Naive thymus-derived CD4-positive, alpha-beta T cell (primary cell): ENCODE measurements at regions of chr7 and their contacts with region 1.

Region 1: GRCh38 chr7:45923290-45923689 is 2.2 kb upstream of the IGFBP3 start:
- DNase-seq: peak in 5 of 9 donors; percentile 26 to 51 (median 31)
- ATAC-seq: no peak
- H3K4me3 ChIP-seq: no peak overlapping the region
- H3K4me3 Mint-ChIP-seq: peak overlapping the region in 9 of 10 donors; percentile 53 to 82 (median 63)
- H3K27ac ChIP-seq: no peak overlapping the region
- H3K27ac Mint-ChIP-seq: peak overlapping the region in 1 of 9 donors; percentile 44
- H3K4me1 ChIP-seq: peaks cover 0 to 9% of the 10 kb centered on the region in 2 donors
- H3K4me1 Mint-ChIP-seq: peaks cover 14 to 29% (median 28%) of the 10 kb centered on the region in 7 donors
- H3K27me3 ChIP-seq: peaks cover 0 to 6% of the 10 kb centered on the region in 2 donors
- H3K27me3 Mint-ChIP-seq: peaks cover 33 to 72% (median 44%) of the 10 kb centered on the region in 5 donors

Region 2: DNA sequence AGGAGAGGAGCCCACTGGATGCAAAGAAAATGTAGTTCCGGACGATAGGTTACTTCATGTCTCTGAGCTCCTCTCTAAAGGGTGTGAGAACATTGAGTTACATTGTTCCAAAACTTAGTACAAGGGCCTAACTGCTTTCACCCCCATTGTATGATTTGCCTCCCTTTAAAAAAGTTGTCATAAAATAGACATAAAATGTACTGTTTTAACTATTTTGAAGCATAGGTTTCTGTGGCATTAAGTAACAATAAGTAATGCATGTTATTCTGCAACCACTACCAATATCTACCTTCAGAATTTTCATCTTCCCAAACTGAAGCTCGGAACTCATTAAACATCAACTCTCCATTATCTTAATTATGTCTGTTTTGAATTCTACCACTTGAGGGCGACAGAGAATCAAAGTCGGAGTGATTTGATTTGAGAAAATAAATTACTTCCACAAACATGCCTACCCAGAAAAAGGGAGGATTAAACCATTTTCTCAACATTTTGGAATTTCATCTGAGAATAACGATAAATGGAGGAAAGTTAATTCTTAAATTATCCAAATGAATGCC is 32.3 kb before region 1 on chr7:
- CTCF ChIA-PET with region 1: interaction called, 3 read pairs
- POLR2A ChIA-PET with region 1: no interaction called
- intact Hi-C with region 1: loop called in 1 of 2 experiments (anchors 1 kb)
- DNase-seq: peak in 3 of 9 donors; percentile 3 to 14 (median 9)
- ATAC-seq: no peak
- H3K4me3 ChIP-seq: no peak overlapping the region
- H3K4me3 Mint-ChIP-seq: no peak overlapping the region
- H3K27ac ChIP-seq: no peak overlapping the region
- H3K27ac Mint-ChIP-seq: no peak overlapping the region
- H3K4me1 ChIP-seq: no peaks in the 10 kb centered on the region
- H3K4me1 Mint-ChIP-seq: peaks cover 0 to 3% (median 0%) of the 10 kb centered on the region in 7 donors
- H3K27me3 ChIP-seq: no peaks in the 10 kb centered on the region
- H3K27me3 Mint-ChIP-seq: peaks cover 53 to 80% (median 65%) of the 10 kb centered on the region in 5 donors

Region 3: GRCh38 chr7:45940939-45941338 is 17.6 kb after region 1 on chr7:
- CTCF ChIA-PET with region 1: interaction called, 9 read pairs
- POLR2A ChIA-PET with region 1: interaction called, 7 read pairs
- intact Hi-C with region 1: loop called in 1 of 2 experiments (anchors 1 kb)
- DNase-seq: no peak
- ATAC-seq: no peak
- H3K4me3 ChIP-seq: peak overlapping the region; percentile 49
- H3K4me3 Mint-ChIP-seq: peak overlapping the region; percentile 77 to 93 (median 86)
- H3K27ac ChIP-seq: no peak overlapping the region
- H3K27ac Mint-ChIP-seq: peak overlapping the region in 8 of 9 donors; percentile 11 to 89 (median 74)
- H3K4me1 ChIP-seq: peaks cover 0 to 11% of the 10 kb centered on the region in 2 donors
- H3K4me1 Mint-ChIP-seq: peaks cover 14 to 50% (median 42%) of the 10 kb centered on the region in 7 donors
- H3K27me3 ChIP-seq: no peaks in the 10 kb centered on the region
- H3K27me3 Mint-ChIP-seq: peaks cover 0 to 8% (median 8%) of the 10 kb centered on the region in 5 donors

Region 4: DNA sequence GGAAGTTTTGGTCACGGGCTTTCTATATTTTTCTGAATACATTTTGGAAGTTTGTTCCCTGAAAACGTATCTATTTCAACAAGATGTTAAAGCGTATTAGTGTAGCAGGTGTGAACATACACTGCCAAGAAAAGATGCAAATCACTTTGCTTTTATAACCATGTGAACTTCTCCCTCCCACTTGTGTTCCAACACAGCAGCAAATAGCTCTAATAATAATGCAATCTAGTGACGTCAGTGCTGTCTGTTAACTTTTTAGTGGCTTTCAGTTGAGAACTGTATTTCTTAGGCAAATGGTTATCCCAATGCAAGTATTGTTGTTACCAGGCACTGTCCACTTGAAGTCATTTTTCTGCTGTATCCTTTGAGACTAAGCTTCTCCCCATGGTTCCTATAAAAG is 186.1 kb after region 1 on chr7:
- CTCF ChIA-PET with region 1: no interaction called
- POLR2A ChIA-PET with region 1: no interaction called
- intact Hi-C with region 1: loop called in 1 of 2 experiments (anchors 1 kb)
- DNase-seq: no peak
- ATAC-seq: no peak
- H3K4me3 ChIP-seq: no peak overlapping the region
- H3K4me3 Mint-ChIP-seq: no peak overlapping the region
- H3K27ac ChIP-seq: no peak overlapping the region
- H3K27ac Mint-ChIP-seq: no peak overlapping the region
- H3K4me1 ChIP-seq: no peaks in the 10 kb centered on the region
- H3K4me1 Mint-ChIP-seq: no peaks in the 10 kb centered on the region
- H3K27me3 ChIP-seq: no peaks in the 10 kb centered on the region
- H3K27me3 Mint-ChIP-seq: no peaks in the 10 kb centered on the region

Region 5: GRCh38 chr7:46352004-46352954 is 429.0 kb after region 1 on chr7:
- CTCF ChIA-PET with region 1: interaction called, 4 read pairs
- POLR2A ChIA-PET with region 1: no interaction called
- intact Hi-C with region 1: loop called in 1 of 2 experiments (anchors 1 kb)
- DNase-seq: peak in 2 of 9 donors; percentile 1 to 4
- ATAC-seq: no peak
- H3K4me3 ChIP-seq: no peak overlapping the region
- H3K4me3 Mint-ChIP-seq: no peak overlapping the region
- H3K27ac ChIP-seq: no peak overlapping the region
- H3K27ac Mint-ChIP-seq: no peak overlapping the region
- H3K4me1 ChIP-seq: no peaks in the 10 kb centered on the region
- H3K4me1 Mint-ChIP-seq: no peaks in the 10 kb centered on the region
- H3K27me3 ChIP-seq: no peaks in the 10 kb centered on the region
- H3K27me3 Mint-ChIP-seq: peaks cover 0 to 7% (median 0%) of the 10 kb centered on the region in 5 donors

Region 6: DNA sequence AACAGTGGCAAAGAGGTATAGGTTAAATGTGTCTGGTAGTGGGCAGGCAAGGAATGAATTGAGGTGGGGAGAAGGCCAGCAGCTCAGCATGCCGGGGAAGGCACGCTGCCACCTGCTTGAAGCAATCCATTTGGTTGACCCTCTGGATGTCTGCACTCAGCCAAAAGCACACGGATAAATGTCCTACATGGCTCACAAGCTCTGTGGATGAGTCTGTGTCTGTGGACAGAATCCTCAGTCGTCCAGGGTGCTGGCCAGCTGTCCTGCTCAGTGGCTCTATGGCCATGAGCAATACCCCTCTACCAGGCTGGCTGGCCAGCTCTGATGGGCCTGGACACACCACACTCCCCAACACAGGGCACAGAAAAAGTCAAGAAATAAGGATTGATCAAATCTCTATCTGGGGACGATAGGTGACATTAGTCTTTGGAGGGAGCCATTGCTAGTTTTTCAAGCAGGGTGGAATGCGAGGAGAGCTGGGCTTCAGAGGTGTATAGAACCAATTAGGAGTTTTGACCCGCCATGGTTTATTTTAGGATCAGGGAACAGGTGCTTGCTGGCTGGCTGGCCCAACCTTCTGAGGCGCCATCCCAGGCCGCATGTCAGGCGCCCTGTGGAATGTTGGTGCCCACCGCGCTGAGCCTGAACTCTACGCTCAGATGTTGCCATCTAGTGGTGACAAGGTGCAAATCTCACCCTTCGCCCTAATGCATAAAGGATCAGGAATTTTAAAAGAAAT is 1165.2 kb after region 1 on chr7:
- CTCF ChIA-PET with region 1: interaction called, 6 read pairs
- POLR2A ChIA-PET with region 1: interaction called, 4 read pairs
- intact Hi-C with region 1: loop called in 1 of 2 experiments (anchors 1 kb)
- DNase-seq: peak in 5 of 9 donors; percentile 2 to 18 (median 6)
- ATAC-seq: no peak
- H3K4me3 ChIP-seq: no peak overlapping the region
- H3K4me3 Mint-ChIP-seq: no peak overlapping the region
- H3K27ac ChIP-seq: no peak overlapping the region
- H3K27ac Mint-ChIP-seq: no peak overlapping the region
- H3K4me1 ChIP-seq: no peaks in the 10 kb centered on the region
- H3K4me1 Mint-ChIP-seq: no peaks in the 10 kb centered on the region
- H3K27me3 ChIP-seq: peaks cover 0 to 3% of the 10 kb centered on the region in 2 donors
- H3K27me3 Mint-ChIP-seq: peaks cover 0 to 23% (median 11%) of the 10 kb centered on the region in 5 donors